ENCODE measurements at regions of chr17 and their contacts with region 1.

Region 1: DNA sequence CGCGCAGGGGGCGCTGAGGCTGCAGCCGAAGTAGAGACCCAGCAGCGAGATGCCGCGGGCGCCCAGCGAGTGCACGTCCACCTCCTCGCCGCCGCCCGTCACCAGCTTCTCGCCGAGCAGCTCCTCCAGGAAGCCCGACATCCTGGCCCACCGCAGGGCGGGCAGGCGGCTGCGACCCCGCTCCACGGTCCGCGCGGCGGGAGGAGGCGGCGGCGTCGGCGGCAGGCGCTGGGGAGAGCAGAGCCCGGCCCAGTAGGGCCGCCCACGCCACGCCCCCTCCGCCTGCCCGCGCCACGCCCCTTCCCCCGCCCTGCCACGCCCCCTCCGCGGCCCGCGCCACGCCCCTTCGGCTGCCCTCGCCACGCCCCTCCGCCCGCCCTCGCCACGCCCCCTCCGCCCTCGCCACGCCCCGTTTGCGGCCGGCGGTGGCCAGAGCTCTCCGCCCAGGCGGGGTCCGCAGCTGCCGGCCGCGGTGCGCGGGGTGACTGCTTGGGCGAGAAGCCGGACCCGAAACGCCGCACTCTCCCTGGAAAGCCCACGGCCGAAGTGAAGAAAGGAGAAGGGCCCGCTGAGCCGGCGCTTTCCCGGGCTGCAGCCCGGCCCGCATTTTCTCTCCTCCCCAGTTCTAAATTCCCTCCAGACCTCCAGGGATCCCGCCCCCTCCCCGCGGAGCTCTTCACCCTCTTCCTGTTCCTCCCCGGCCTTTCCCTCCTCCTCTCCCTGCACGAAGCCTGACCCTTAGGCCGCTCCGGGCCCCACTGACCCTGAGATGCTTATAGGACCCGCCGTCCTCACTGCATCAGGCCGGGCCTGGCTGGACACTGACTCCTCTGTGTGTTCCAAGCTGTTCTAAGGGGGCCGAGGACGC is at the start of gene NXN:
- H3K4me3 ChIP-seq: peak within 1 kb of the TSS; percentile 85
- H3K27ac ChIP-seq: peak within 1 kb of the TSS; percentile 76; the same call in 1 of the 2 replicates
- H3K4me1 ChIP-seq: peaks cover 9% of the 10 kb centered on the region; the same call in 1 of the 2 replicates
- CTCF ChIP-seq: peak; percentile 50

Region 2: DNA sequence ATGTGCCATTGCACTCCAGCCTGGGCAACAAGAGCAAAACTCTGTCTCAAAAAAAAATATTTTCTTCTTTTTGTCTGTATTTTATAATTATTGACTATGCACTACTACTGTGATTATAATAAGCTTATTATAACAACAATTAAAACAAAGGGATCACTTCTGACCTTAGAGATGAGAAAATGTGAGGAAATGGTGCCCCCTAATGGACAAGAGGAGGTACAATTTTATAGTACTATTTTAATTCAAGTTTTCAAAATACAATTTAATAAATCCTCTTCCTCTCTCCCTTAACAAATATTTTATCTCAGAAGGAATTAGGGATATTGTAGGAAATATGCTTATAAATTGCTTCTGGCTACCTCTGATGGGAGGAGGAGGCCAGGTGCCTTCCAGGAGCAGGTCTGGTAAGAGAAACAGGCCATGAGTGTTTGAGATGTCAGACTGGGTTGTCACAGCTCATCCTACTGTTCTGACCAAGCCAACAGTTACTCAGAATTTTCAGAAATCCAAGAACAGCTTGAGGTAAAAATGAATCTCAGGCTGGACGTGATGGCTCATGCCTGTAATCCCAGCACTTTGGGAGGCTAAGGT is 279.2 kb before region 1 on chr17:
- CTCF ChIA-PET with region 1: interaction called, 11 read pairs
- POLR2A ChIA-PET with region 1: no interaction called
- H3K4me3 ChIP-seq: no peak overlapping the region
- H3K27ac ChIP-seq: no peak overlapping the region
- H3K4me1 ChIP-seq: no peaks in the 10 kb centered on the region
- CTCF ChIP-seq: 0 out of 2 replicates have a peak, but pooled peaks have one; percentile 34

Region 3: DNA sequence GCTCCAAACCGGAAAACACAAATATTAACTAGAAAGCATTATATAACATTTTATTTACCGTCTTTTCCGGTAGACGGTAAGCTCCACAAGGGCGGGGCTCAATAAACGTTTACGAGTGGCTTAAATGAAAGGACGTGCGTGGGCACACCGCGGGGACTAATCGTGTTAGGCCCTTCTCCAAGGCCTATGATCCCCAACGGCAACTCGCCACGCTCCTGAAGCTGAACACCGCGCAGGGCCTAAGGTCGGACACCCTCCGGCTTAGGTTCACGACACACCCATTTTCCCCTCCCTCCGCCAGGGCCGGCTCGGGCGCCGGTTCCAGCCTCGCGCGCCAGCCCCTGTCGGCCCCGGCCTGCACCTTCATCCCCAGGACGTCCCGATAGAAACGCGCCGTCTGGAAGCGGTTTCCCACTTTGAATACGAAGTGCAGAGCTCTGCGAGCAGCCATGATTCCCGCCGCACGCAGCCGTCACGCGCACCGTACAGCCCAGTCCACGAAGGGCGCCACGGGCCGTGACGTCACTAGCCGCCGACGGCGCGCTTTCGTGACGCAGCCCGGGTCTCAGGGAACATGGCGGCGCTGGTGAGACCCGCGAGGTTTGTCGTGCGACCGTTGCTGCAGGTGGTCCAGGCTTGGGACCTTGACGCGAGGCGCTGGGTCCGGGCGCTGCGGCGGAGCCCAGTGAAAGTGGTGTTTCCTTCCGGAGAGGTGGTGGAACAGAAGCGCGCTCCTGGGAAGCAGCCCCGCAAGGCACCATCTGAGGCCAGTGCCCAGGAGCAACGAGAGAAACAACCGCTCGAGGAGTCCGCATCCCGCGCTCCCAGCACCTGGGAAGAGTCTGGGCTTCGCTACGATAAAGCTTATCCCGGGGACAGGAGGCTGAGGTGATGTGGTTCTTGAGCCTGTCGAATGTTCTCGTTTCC is 197.7 kb before region 1 on chr17 and contains the starts of genes GLOD4 and MRM3:
- CTCF ChIA-PET with region 1: interaction called, 28 read pairs
- POLR2A ChIA-PET with region 1: interaction called, 28 read pairs
- H3K4me3 ChIP-seq: peak within 1 kb of the TSS; percentile 88
- H3K27ac ChIP-seq: peak within 1 kb of the TSS; percentile 75
- H3K4me1 ChIP-seq: peaks cover 7% of the 10 kb centered on the region
- CTCF ChIP-seq: peak; percentile 87

Region 4: GRCh38 chr17:879549-880442 is 100.0 kb before region 1 on chr17:
- CTCF ChIA-PET with region 1: interaction called, 54 read pairs
- POLR2A ChIA-PET with region 1: interaction called, 15 read pairs
- H3K4me3 ChIP-seq: no peak overlapping the region
- H3K27ac ChIP-seq: no peak overlapping the region
- H3K4me1 ChIP-seq: peaks cover 17% of the 10 kb centered on the region
- CTCF ChIP-seq: peak; percentile 64

Region 5: DNA sequence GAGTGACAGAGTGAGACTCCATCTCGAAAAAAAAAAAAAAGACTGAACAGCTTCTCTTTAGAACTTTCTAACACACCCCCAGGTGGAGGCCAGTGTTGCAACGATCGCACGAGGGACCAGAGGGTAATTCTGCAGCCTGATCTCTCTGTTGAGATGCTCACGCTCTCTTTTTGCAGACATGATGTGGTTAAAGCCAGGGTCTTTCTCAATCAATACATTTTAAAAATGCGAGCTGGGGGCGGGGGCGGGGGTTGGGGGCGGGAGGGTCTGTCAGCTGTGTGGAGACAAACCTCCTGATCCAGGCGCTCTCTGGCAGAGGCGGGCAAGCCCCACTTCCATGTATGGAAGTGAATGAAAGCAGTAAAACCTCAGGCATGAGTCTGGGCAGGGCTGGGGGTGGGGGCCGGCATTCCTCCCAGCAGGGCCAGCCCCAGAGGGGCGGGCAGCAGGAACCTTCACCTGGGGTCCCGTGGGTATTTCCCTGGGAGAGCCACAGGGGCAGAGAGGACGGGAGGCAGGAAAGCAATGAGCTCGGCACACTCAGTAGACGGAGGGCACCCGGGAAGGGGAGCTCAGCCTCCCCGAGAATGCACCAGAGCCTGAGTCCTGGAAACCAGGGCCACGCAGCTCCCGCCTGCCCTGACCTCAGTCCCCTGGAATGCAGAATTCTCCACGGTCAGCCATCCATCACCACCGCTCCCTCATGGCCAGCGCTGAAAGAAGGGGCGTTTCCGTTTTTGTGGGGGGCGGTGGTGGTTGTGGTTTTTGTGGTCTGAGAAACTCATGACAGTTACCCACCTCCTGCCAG is 28.2 kb before region 1 on chr17:
- CTCF ChIA-PET with region 1: interaction called, 13 read pairs
- POLR2A ChIA-PET with region 1: interaction called, 12 read pairs
- H3K4me3 ChIP-seq: peak overlapping the region; percentile 24
- H3K27ac ChIP-seq: 0 out of 2 replicates have a peak overlapping the region, but pooled peaks have one; percentile 11
- H3K4me1 ChIP-seq: peaks cover 14% of the 10 kb centered on the region
- CTCF ChIP-seq: no peak

Region 6: GRCh38 chr17:996554-997344 is 17.0 kb after region 1 on chr17 and contains the start of gene TIMM22:
- CTCF ChIA-PET with region 1: interaction called, 24 read pairs
- POLR2A ChIA-PET with region 1: interaction called, 21 read pairs
- H3K4me3 ChIP-seq: peak within 1 kb of the TSS; percentile 67
- H3K27ac ChIP-seq: peak within 1 kb of the TSS; percentile 93
- H3K4me1 ChIP-seq: peaks cover 14% of the 10 kb centered on the region
- CTCF ChIP-seq: peak; percentile 99